BJ (cell line): ENCODE measurements at regions of chr12 and their contacts with region 1.

Region 1: GRCh38 chr12:30926243-30927221 is at the start of gene TSPAN11:
- DNase-seq: no peak
- H3K4me3 ChIP-seq: peak within 1 kb of the TSS; percentile 34
- H3K27me3 ChIP-seq: peaks cover 2% of the 10 kb centered on the region
- CTCF ChIP-seq: no peak
- polyA plus RNA-seq, gene TSPAN11: 0.44 and 0.64 TPM in 2 replicates

Region 2: DNA sequence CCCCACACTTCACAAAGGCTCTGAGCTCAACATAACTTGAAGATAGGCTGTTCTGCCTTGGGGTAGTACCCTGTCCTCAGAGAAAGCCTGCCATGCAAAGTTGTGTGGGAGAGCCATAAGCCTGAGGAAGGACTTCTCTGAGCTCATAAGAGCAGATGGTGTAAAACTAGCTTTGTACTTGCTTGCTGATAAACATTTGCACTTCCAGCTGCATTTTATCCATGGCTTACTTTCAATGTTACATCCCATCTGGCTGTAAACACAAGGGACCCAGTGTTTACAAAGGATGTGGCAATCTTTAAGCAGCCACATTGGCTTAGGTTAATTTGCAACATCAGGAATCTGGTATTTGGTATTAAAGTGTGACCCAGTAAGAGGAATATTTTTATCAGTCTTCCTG is 488.9 kb before region 1 on chr12:
- CTCF ChIA-PET with region 1: no interaction called
- POLR2A ChIA-PET with region 1: interaction called, 16 read pairs
- DNase-seq: no peak
- H3K4me3 ChIP-seq: no peak overlapping the region
- H3K27me3 ChIP-seq: no peaks in the 10 kb centered on the region
- CTCF ChIP-seq: no peak

Region 3: GRCh38 chr12:31215518-31216232 is 289.1 kb after region 1 on chr12:
- CTCF ChIA-PET with region 1: no interaction called
- POLR2A ChIA-PET with region 1: no interaction called
- DNase-seq: no peak
- H3K4me3 ChIP-seq: no peak overlapping the region
- H3K27me3 ChIP-seq: peaks cover 7% of the 10 kb centered on the region
- CTCF ChIP-seq: no peak